ENCODE measurements at regions of chr20 and their contacts with region 1.

Region 1: GRCh38 chr20:13119583-13119982 is 101.5 kb upstream of the ISM1 start:
- DNase-seq: no peak
- ATAC-seq: peak; percentile 57
- H3K4me3 Mint-ChIP-seq: no peak overlapping the region
- H3K27ac Mint-ChIP-seq: no peak overlapping the region
- H3K4me1 Mint-ChIP-seq: no peaks in the 10 kb centered on the region
- H3K27me3 Mint-ChIP-seq: peaks cover 6% of the 10 kb centered on the region
- CTCF ChIP-seq: peak; percentile 74

Region 2: DNA sequence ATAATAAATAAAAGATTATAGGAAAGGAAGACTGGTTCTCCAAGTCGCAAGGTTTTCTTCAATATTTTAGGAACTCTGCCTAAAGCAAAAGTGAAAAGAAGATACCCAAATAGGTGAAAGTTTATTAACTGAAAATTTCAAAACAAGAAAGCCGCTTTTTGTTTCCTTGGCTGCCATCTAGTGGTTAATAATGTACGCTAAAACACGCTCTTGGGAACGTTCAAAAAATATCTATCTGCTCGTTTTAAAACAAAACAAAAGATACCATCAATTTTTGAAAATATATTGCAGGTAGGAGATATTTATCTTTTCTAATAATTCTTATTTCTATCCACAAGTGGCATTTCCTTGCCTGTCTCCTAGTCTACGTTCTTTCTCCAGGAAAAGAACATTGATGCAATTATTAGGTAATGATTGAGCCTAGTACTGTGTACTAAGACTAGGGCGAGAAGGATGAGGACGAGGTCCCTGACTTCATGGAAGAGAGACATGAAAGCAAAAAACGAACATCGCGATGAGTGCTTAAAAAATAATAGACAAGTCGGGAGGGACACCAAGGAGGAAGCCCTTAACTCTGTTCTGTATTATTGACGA is 13.6 kb before region 1 on chr20:
- CTCF ChIA-PET with region 1: interaction called, 19 read pairs
- POLR2A ChIA-PET with region 1: no interaction called
- intact Hi-C with region 1: no loop called
- DNase-seq: no peak
- ATAC-seq: no peak
- H3K4me3 Mint-ChIP-seq: no peak overlapping the region
- H3K27ac Mint-ChIP-seq: no peak overlapping the region
- H3K4me1 Mint-ChIP-seq: no peaks in the 10 kb centered on the region
- H3K27me3 Mint-ChIP-seq: peaks cover 3% of the 10 kb centered on the region
- CTCF ChIP-seq: peak; percentile 81

Region 3: GRCh38 chr20:13147071-13147963 is 27.7 kb after region 1 on chr20:
- CTCF ChIA-PET with region 1: no interaction called
- POLR2A ChIA-PET with region 1: no interaction called
- intact Hi-C with region 1: no loop called
- DNase-seq: no peak
- ATAC-seq: no peak
- H3K4me3 Mint-ChIP-seq: no peak overlapping the region
- H3K27ac Mint-ChIP-seq: no peak overlapping the region
- H3K4me1 Mint-ChIP-seq: no peaks in the 10 kb centered on the region
- H3K27me3 Mint-ChIP-seq: no peaks in the 10 kb centered on the region
- CTCF ChIP-seq: no peak

Region 4: GRCh38 chr20:13261460-13262301 is 142.1 kb after region 1 on chr20:
- CTCF ChIA-PET with region 1: no interaction called
- POLR2A ChIA-PET with region 1: no interaction called
- intact Hi-C with region 1: loop called (anchors 1 kb)
- DNase-seq: no peak
- ATAC-seq: no peak
- H3K4me3 Mint-ChIP-seq: no peak overlapping the region
- H3K27ac Mint-ChIP-seq: no peak overlapping the region
- H3K4me1 Mint-ChIP-seq: no peaks in the 10 kb centered on the region
- H3K27me3 Mint-ChIP-seq: peaks cover 5% of the 10 kb centered on the region
- CTCF ChIP-seq: no peak

Region 5: DNA sequence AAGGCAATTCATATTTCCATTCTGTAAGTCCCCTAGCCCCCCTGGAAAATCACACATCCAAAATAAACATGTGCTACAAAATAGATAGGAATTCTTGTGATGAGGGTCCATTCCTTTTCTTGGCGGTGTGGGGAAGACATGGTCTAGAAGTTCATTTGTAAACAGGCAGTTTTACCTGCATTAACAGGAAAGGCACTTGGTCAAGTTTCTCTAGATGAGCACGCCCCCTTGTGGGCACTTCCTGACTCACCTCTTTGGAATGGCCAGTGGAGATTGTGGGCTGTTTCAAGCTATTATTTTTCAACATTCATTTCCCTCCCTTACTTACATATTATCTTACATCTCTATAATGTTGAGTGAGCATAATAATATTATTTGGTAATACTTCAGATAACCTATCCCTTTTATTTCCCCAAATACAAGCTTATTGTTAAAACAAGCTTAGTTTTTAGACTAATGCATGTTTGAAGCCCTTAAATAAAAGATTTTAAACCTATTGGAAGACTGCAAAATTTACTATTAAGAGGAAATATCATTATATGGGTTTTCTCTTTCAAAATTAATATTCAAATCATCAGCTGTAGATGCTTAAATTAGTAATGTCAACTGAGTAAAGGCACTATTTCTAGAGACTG is 427.0 kb after region 1 on chr20:
- CTCF ChIA-PET with region 1: interaction called, 6 read pairs
- POLR2A ChIA-PET with region 1: no interaction called
- intact Hi-C with region 1: loop called (anchors 1 kb)
- DNase-seq: peak; percentile 17
- ATAC-seq: no peak
- H3K4me3 Mint-ChIP-seq: no peak overlapping the region
- H3K27ac Mint-ChIP-seq: no peak overlapping the region
- H3K4me1 Mint-ChIP-seq: no peaks in the 10 kb centered on the region
- H3K27me3 Mint-ChIP-seq: no peaks in the 10 kb centered on the region
- CTCF ChIP-seq: no peak

Region 6: GRCh38 chr20:13771853-13772453 is 652.4 kb after region 1 on chr20:
- CTCF ChIA-PET with region 1: interaction called, 25 read pairs
- POLR2A ChIA-PET with region 1: no interaction called
- intact Hi-C with region 1: loop called (anchors 1 kb)
- DNase-seq: no peak
- ATAC-seq: no peak
- H3K4me3 Mint-ChIP-seq: no peak overlapping the region
- H3K27ac Mint-ChIP-seq: no peak overlapping the region
- H3K4me1 Mint-ChIP-seq: peaks cover 9% of the 10 kb centered on the region
- H3K27me3 Mint-ChIP-seq: no peaks in the 10 kb centered on the region
- CTCF ChIP-seq: no peak

Region 7: GRCh38 chr20:13784893-13785715 is 665.5 kb after region 1 on chr20 and contains the starts of genes ESF1 and NDUFAF5:
- CTCF ChIA-PET with region 1: interaction called, 9 read pairs
- POLR2A ChIA-PET with region 1: no interaction called
- intact Hi-C with region 1: loop called (anchors 1 kb)
- DNase-seq: peak; percentile 88
- ATAC-seq: peak; percentile 98
- H3K4me3 Mint-ChIP-seq: peak within 1 kb of the TSS; percentile 94
- H3K27ac Mint-ChIP-seq: peak within 1 kb of the TSS; percentile 90
- H3K4me1 Mint-ChIP-seq: peaks cover 53% of the 10 kb centered on the region
- H3K27me3 Mint-ChIP-seq: no peaks in the 10 kb centered on the region
- CTCF ChIP-seq: no peak
- total RNA-seq, gene ESF1: 15.5 and 15.8 TPM in 2 replicates
- total RNA-seq, gene NDUFAF5: 22.7 and 29.8 TPM in 2 replicates

Region 8: DNA sequence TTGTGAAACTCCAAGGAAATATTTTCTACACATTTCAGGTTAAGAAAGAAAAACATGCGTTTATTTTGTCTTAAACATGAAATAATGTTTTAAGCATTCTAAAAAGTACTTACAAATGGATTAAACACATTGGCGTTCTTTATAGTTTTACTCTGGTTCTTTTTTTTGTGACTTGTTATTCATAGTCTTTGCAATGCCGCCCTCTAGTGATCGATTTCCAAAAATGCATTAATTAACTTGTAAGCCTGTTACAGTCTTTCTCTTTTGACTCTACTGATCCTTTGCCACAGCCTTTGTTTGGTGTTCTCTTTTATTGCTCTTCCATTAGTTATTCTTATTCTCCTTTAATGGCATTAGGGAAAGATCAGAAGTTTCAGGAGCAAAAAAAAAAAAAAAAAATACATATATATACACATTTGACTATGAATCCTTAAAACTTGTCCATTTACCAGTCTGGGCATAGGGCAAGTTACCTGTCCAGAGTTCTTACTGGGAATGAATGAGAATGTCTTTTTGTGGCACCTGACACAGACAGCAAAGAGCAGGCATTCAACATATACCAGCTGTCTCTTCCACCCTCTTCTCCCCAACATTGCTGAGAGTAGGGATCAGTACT is 935.7 kb after region 1 on chr20:
- CTCF ChIA-PET with region 1: no interaction called
- POLR2A ChIA-PET with region 1: no interaction called
- intact Hi-C with region 1: loop called (anchors 1 kb)
- DNase-seq: no peak
- ATAC-seq: peak; percentile 31
- H3K4me3 Mint-ChIP-seq: no peak overlapping the region
- H3K27ac Mint-ChIP-seq: no peak overlapping the region
- H3K4me1 Mint-ChIP-seq: no peaks in the 10 kb centered on the region
- H3K27me3 Mint-ChIP-seq: peaks cover 2% of the 10 kb centered on the region
- CTCF ChIP-seq: peak; percentile 64